Head of caudate nucleus (tissue), 42 donors: ENCODE measurements at regions of chr4 and their contacts with region 1.

Region 1: DNA sequence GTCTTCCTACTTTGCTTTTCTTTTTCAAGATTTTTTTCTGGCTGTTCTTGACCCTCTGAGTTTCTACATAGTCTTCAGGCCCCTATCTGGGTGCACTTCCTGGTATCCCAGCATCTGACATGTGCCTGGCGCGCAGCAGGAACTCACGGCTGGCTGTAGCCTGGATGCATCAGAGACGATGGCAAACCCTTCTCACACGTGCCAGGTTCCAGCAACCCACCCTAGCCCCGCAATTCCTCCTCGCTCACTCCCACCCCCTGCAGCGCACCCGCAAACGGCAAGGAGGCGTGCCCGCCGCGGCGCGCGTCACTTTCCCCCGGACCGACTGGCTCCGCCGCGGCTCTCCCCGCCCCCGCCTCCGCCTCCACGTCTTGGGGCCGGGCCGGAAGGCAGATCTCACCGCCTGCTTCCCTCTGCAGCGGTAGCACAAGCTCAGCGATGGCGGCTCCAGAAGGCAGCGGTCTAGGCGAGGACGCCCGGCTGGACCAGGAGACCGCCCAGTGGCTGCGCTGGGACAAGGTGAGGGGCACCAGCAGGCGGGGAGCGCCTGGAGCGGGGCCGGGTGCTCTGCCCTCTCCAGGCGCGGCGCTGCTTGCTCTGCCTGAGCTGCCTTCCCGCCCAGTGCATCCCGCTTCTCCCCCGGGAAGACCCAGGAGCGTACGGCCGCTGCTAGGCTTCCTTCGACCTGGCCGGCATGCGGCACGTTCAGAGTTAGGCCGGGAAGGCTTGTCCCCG is at the start of gene PGM2:
- DNase-seq: peak; percentile 46 to 92 (median 82)

Region 2: DNA sequence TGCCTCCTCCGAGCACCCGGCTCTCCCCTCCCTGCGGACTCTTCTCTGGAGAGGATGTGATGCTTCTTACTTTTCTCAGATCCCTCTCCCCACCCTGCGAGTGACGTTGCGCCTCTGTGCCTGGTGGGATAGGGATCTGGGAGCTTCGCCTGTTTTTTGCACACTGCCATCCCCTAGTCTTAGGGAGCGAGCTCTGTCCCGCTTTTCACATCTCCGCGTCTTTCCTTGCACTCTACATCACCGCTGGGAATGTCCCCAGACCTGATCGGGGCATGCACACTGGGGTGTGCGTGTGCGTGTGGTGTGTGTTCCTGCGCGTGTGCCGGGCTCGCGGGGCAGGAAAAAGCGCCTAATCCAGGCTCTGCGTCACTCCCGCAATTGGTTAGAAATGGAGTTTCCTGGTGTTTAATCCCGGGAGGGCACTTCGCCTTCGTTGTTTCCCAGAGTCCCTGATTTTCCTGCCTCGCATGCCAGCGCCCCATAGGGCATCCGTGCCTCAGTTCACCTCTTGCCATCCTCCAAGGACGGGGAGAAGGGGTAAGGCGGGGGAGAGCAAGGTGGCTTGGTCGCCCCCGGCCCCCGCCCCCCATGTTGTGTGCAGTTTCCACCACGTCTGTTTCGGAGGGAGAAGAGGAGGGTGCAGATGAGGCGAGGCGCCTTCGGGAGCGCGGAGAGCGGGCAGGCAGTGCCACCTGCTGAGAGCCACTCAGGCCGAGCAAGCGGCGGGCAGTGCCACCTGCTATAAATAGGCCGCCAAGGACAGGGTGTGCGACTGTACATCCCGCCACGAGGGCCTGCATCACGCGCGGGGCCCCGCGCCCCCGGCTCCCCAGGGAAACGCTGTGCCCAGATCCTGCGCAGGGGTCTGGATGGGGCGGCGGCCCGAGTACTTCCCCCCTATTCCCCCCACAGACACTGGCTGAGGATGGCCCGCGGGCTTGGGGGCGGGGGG is 63.7 kb after region 1 on chr4:
- intact Hi-C with region 1: loop called (anchors 2 kb)
- DNase-seq: peak; percentile 32 to 84 (median 64)

Region 3: GRCh38 chr4:37977471-37978247 is 151.2 kb after region 1 on chr4:
- intact Hi-C with region 1: loop called (anchors 5 kb)
- DNase-seq: peak; percentile 33 to 91 (median 78)

Region 4: DNA sequence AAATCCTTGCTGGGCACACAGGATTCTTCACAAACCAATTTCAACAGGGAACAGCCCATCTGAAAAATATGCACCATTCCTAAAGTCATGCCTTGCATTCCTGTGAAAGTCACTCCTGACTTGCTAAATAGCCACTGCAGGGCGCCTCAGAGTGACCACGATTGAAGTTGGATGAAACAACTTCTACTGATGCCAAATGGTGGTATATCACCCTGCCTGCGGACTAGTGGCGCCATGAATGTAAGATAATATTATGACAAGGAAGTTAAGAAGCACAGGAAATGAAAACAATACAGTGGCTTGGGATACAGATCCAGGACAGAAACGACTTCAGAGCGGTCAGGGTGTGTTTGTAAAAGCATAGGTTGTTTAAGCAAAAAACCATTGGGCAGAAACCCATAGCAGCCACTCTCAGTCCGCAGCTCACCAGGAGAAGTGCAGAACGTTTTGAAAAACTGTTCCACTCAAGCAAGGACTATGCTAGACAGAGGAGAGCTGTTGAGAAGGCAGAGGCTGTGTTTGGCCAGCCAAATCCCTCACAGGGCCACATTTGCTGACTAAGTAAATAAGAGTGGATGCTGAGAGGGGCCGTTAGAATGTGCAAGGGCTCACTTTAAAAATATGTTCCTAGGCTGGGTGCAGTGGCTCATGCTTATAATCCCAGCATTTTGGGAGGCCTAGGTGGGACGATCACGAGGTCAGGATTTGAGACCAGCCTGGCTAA is 384.1 kb after region 1 on chr4:
- intact Hi-C with region 1: no loop called
- DNase-seq: no peak